ENCODE measurements at regions of chr16 and their contacts with region 1.

Region 1: GRCh38 chr16:84754353-84754856 is 54.6 kb downstream of the USP10 start:
- DNase-seq: peak; percentile 89
- H3K4me3 Mint-ChIP-seq: peak overlapping the region; percentile 25
- H3K27ac Mint-ChIP-seq: peak overlapping the region; percentile 27
- H3K4me1 Mint-ChIP-seq: peaks cover 75% of the 10 kb centered on the region
- H3K27me3 Mint-ChIP-seq: no peaks in the 10 kb centered on the region

Region 2: GRCh38 chr16:84738255-84739038 is 16.0 kb before region 1 on chr16:
- CTCF ChIA-PET with region 1: interaction called, 46 read pairs
- POLR2A ChIA-PET with region 1: no interaction called
- DNase-seq: peak; percentile 84
- H3K4me3 Mint-ChIP-seq: peak overlapping the region; percentile 28
- H3K27ac Mint-ChIP-seq: no peak overlapping the region
- H3K4me1 Mint-ChIP-seq: peaks cover 64% of the 10 kb centered on the region
- H3K27me3 Mint-ChIP-seq: no peaks in the 10 kb centered on the region

Region 3: DNA sequence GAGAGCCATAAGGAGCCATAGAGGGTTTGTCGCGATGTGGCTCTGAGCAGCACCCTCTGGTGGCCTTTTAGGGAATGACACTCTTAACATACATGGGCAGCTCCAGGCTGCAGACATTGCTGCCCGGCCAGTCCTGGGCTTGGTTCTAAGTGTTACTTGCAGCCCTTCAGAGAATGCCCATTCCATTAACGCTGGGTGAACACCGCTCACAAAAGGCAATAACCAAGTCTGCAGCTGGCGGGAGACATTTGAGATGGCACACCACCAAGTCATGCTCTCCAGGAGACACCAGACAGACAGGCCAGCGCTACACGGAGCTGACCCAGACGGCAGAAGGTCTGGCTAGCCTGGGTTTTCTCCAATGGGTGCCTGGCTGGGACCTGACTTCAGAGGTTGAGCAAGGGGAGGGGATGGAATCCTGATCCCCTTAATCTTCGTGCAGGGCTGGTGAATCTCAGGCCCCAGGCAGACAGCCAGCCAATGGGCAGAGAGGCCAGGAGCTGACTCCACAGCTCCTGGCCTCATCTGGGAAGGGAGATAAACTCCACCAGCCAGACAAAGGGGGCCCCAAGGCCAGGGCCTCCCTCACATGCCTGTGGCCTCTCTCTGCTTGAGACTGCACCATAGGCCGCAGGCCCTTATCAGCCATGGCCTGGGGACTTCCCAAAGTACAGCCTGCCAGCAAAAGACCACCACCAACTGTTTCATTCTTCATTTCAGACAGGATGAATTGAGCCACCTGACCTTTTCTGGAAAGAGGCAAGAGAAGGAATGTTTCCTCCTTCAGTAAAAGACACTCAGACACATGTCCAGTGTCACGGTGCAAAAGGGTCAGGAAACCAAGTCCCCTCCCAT is 198.2 kb after region 1 on chr16:
- CTCF ChIA-PET with region 1: interaction called, 24 read pairs
- POLR2A ChIA-PET with region 1: no interaction called
- DNase-seq: peak; percentile 75
- H3K4me3 Mint-ChIP-seq: no peak overlapping the region
- H3K27ac Mint-ChIP-seq: no peak overlapping the region
- H3K4me1 Mint-ChIP-seq: peaks cover 4% of the 10 kb centered on the region
- H3K27me3 Mint-ChIP-seq: no peaks in the 10 kb centered on the region

Region 4: DNA sequence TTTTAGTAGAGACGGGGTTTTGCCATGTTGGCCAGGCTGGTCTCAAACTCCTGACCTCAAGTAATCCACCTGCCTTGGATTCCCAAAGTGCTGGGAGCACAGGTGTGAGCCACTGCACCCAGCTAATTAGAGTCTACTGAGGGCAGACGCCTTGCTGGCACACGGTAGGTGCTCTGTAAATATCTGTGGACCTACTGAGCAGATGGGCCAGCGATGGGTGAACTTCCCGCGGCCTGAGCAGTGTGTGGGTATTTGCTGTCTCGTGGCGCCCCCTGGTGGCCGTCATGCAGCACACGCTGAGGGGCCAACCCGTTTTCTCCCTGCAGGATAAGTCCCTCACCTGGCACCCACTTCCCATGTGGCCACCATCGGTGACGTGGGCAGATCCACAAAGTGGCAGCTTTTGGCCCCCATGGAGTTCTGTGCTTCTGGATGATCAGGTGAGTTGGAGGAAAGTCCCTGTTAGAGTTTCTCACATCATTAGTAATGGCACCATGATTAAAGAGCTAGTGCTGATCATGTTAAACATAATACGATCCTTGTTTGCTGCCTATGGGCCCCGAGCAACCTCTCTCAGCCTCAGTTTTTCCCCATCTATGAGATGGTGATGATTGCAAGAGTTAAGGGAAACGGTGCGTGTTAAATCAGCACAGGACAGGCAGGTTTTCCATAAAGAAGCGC is 216.2 kb after region 1 on chr16:
- CTCF ChIA-PET with region 1: interaction called, 14 read pairs
- POLR2A ChIA-PET with region 1: no interaction called
- DNase-seq: peak; percentile 84
- H3K4me3 Mint-ChIP-seq: no peak overlapping the region
- H3K27ac Mint-ChIP-seq: no peak overlapping the region
- H3K4me1 Mint-ChIP-seq: peaks cover 5% of the 10 kb centered on the region
- H3K27me3 Mint-ChIP-seq: no peaks in the 10 kb centered on the region